ENCODE measurements at regions of chr5 and their contacts with region 1.

Region 1: GRCh38 chr5:62284946-62285891 is 20.8 kb upstream of the KIF2A start:
- DNase-seq: peak; percentile 66
- H3K4me3 Mint-ChIP-seq: peak overlapping the region; percentile 55
- H3K27ac Mint-ChIP-seq: peak overlapping the region; percentile 98
- H3K4me1 Mint-ChIP-seq: peaks cover 78% of the 10 kb centered on the region
- H3K27me3 Mint-ChIP-seq: no peaks in the 10 kb centered on the region

Region 2: DNA sequence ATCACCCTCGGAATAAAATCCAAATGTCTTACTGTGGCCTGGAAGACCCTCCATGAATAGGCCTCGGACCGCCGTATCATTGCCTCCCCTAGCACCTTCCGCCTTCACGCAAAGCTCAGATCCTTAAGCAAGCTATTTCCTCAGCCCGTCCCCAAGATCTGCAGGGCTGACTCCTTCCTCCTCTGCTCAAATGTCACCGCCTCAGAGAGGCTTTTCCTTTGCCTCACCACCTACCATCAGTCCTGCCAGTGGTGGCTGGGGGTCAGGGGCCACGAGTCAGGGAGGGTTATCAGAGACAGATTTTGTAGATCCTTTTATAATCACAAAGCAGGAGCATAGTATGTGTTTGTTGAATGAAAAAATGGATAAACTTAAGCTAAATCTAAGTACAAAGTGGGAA is 53.6 kb before region 1 on chr5:
- intact Hi-C with region 1: loop called (anchors 1 kb)
- DNase-seq: no peak
- H3K4me3 Mint-ChIP-seq: peak overlapping the region; percentile 9
- H3K27ac Mint-ChIP-seq: peak overlapping the region; percentile 62
- H3K4me1 Mint-ChIP-seq: peaks cover 66% of the 10 kb centered on the region
- H3K27me3 Mint-ChIP-seq: no peaks in the 10 kb centered on the region

Region 3: GRCh38 chr5:62268234-62268633 is 17.0 kb before region 1 on chr5:
- intact Hi-C with region 1: loop called (anchors 1 kb)
- DNase-seq: no peak
- H3K4me3 Mint-ChIP-seq: no peak overlapping the region
- H3K27ac Mint-ChIP-seq: peak overlapping the region; percentile 72
- H3K4me1 Mint-ChIP-seq: peaks cover 54% of the 10 kb centered on the region
- H3K27me3 Mint-ChIP-seq: no peaks in the 10 kb centered on the region

Region 4: GRCh38 chr5:62305715-62306322 is 20.6 kb after region 1 on chr5 and contains the start of gene KIF2A:
- intact Hi-C with region 1: loop called (anchors 1 kb)
- DNase-seq: peak; percentile 96
- H3K4me3 Mint-ChIP-seq: peak within 1 kb of the TSS; percentile 99
- H3K27ac Mint-ChIP-seq: peak within 1 kb of the TSS; percentile 97
- H3K4me1 Mint-ChIP-seq: peaks cover 48% of the 10 kb centered on the region
- H3K27me3 Mint-ChIP-seq: no peaks in the 10 kb centered on the region
- total RNA-seq, gene KIF2A: 285 and 294 TPM in 2 replicates

Region 5: DNA sequence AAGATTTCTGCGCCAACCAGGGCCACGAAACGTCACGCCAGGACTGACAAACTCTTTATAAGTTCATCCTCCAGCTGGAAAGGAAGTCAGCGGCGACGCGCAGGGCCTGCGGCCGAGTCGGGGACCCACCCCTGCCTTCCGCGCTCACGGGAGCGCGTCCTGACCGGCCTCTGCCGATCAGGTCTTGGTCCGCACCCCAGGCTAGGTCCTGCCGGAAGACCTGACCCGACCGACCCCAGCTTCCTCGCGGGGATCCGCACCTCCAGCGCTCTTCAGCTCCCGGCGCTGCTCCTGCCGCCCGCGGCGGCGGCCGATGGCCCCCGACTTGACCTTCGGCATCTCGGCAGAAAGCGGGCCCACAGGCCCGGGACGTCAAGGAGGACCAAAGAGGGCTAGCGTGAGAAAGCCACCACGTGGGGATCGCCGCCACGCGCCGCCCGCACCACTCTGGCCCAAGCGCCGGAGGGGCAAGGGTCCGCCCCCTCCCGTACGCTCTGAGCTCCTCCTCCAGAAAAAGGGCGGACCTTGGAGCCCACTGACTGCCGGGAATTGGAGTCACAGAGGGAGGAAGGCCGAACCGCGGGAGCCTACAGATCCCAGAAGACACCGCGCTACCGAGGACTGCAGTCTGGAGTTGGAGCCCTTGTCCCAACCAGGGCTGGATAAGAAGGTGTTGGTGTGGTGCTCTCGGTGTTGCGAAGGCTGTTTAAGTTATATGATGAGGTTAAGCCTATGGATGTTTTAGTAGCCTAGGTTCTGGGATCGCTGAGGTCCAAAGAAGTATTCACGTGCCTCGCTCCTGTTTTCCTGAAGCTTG is 118.4 kb after region 1 on chr5 and contains the start of gene DIMT1:
- intact Hi-C with region 1: loop called (anchors 5 kb)
- DNase-seq: peak; percentile 92
- H3K4me3 Mint-ChIP-seq: peak within 1 kb of the TSS; percentile 94
- H3K27ac Mint-ChIP-seq: peak within 1 kb of the TSS; percentile 91
- H3K4me1 Mint-ChIP-seq: peaks cover 25% of the 10 kb centered on the region
- H3K27me3 Mint-ChIP-seq: no peaks in the 10 kb centered on the region
- total RNA-seq, gene DIMT1: 39.8 and 45.0 TPM in 2 replicates